Calu3 (cell line): ENCODE measurements at regions of chr11 and their contacts with region 1.

Region 1: DNA sequence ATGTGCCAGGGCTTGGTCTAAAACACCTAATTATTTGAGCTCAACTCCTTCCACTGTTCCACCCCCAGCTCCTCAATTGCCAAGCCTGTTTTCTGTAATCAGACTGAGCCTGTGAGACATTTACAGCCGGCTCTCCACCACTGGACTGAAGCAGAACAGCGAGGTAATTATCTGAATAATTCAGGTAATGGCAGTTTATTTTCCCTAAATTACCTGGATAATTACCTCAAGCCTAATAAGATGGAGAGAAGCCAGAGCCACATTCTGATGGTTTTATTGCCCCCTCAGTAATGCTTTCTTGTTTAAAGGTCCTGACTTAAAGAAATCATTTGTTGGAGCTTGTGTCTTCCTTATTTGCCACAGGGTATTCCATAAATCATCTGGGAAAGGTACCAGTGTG is 64.2 kb downstream of the FZD4 start:
- DNase-seq: no peak
- H3K4me3 Mint-ChIP-seq: no peak overlapping the region
- H3K27ac Mint-ChIP-seq: no peak overlapping the region
- H3K4me1 Mint-ChIP-seq: no peaks in the 10 kb centered on the region
- H3K27me3 Mint-ChIP-seq: no peaks in the 10 kb centered on the region
- CTCF ChIP-seq: no peak

Region 2: DNA sequence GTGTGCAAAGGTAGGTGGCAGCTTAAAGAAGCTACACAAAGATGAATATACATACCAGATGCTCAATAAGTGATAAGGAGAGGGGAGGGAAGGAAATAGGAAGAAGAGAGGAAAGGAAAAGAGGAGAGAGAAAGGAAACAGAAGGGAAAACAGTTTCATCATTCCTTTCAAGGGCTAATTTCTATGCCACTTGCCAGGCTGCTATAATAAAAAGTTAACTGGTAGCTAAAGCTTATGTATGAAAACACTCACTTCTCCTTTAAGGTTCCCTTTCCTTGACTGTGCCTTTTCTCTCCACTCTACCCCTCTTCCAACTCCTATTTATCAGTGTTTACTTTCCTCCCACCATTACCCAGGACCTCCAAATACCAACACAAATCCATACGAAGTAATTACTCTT is 1611.8 kb before region 1 on chr11:
- CTCF ChIA-PET with region 1: no interaction called
- intact Hi-C with region 1: loop called (anchors 5 kb)
- DNase-seq: no peak
- H3K4me3 Mint-ChIP-seq: no peak overlapping the region
- H3K27ac Mint-ChIP-seq: no peak overlapping the region
- H3K4me1 Mint-ChIP-seq: no peaks in the 10 kb centered on the region
- H3K27me3 Mint-ChIP-seq: no peaks in the 10 kb centered on the region
- CTCF ChIP-seq: no peak

Region 3: DNA sequence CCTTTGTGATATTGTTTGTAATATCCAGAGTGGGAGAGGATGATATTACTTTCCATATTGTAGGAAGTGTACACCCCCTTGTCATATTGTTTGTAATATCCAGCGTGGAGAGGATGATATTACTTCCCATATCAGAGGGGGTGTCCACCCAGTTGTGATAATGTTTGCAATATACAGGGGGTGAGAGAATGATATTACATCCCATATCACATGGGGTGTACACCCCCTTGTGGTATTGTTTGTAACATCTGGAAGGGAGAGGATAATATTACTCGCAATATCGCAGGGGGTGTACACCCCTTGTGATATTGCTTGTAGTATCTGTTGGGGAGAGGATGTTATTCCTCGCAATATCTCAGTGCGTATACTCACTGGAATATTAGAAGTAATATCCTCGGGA is 29.2 kb before region 1 on chr11:
- CTCF ChIA-PET with region 1: no interaction called
- intact Hi-C with region 1: no loop called
- DNase-seq: no peak
- H3K4me3 Mint-ChIP-seq: no peak overlapping the region
- H3K27ac Mint-ChIP-seq: no peak overlapping the region
- H3K4me1 Mint-ChIP-seq: no peaks in the 10 kb centered on the region
- H3K27me3 Mint-ChIP-seq: peaks cover 38% of the 10 kb centered on the region
- CTCF ChIP-seq: no peak